ENCODE measurements at regions of chr10 and their contacts with region 1.

Region 1: GRCh38 chr10:32171204-32171603 is 115.0 kb upstream of the KIF5B start:
- DNase-seq: peak; percentile 87 to 89
- H3K4me3 ChIP-seq: no peak overlapping the region
- H3K4me3 Mint-ChIP-seq: peak overlapping the region; percentile 63
- H3K27ac Mint-ChIP-seq: peak overlapping the region; percentile 96
- H3K4me1 ChIP-seq: peaks cover 29% of the 10 kb centered on the region
- H3K4me1 Mint-ChIP-seq: peaks cover 23% of the 10 kb centered on the region
- H3K27me3 ChIP-seq: no peaks in the 10 kb centered on the region
- H3K27me3 Mint-ChIP-seq: no peaks in the 10 kb centered on the region
- CTCF ChIP-seq: no peak

Region 2: DNA sequence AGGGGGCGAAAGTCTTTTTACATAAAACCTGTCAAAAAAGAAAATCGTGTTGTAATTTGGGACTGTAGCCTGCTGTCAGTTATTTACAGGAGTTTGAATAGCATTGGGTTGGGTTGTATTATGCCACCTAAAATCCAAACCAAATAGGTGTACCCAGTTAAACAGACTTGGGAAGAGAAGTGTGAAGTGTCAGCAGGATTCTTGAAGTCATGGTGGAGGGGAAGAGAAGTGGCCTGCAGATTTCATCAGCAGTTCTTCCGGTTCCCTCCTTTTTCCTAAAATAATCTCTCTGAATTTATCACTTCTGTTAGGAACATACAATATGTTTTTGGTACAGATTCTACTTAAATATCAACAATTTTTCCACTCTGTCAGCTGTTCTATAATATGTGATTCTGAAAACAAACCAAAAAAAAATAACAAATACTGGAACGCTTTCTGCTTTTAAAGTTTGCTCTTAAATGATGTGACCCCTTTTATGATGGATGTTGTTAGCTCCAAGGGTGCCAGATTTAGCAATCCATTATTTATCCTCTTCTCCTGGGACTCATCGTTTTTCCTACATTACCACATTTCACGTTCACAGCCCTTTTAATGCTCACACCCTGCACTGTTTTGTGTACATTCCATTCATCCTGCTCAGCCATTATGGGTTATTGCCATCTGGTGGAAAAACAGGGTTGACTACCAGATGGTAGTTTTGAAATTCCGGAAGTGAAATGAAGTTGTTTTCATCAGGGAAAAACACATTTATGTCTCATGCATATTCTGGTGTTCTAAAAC is 223.9 kb before region 1 on chr10:
- CTCF ChIA-PET with region 1: no interaction called
- POLR2A ChIA-PET with region 1: no interaction called
- intact Hi-C with region 1: loop called (anchors 5 kb)
- DNase-seq: peak; percentile 74 to 84
- H3K4me3 ChIP-seq: peak overlapping the region; percentile 10
- H3K4me3 Mint-ChIP-seq: peak overlapping the region; percentile 65
- H3K27ac Mint-ChIP-seq: peak overlapping the region; percentile 70
- H3K4me1 ChIP-seq: peaks cover 42% of the 10 kb centered on the region
- H3K4me1 Mint-ChIP-seq: peaks cover 26% of the 10 kb centered on the region
- H3K27me3 ChIP-seq: no peaks in the 10 kb centered on the region
- H3K27me3 Mint-ChIP-seq: no peaks in the 10 kb centered on the region
- CTCF ChIP-seq: peak; percentile 47 to 82

Region 3: DNA sequence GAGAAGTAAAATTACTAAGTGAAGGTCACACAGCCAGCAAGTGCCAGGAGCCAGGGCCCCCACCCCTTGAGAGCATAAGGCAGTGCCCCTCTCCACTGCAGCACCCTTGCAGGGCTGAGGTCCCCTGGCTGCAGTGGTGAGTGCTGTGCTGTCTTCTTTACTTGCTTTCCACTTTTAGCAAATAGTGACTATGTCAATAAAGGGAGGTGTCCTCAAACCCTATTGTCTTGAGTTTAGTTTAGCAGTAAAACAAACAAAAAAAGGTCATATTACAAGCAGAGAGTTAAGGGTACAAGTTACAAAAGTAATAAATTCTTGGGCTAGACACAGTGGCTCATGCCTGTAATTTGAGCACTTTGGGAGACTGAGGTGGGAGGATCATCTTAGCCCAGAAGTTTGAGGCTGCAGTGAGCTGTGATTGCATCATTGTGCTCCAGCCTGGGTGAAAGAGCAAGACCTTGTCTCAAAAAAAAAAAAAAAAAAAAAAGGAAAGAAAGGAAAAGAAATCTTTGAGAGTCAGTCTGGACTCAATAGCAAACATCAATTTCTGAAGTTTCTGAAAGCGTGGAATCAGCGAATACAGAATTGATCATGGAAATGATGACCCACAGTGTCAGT is 76.0 kb before region 1 on chr10:
- CTCF ChIA-PET with region 1: no interaction called
- POLR2A ChIA-PET with region 1: no interaction called
- intact Hi-C with region 1: loop called (anchors 1 kb)
- DNase-seq: peak; percentile 70 to 83
- H3K4me3 ChIP-seq: no peak overlapping the region
- H3K4me3 Mint-ChIP-seq: no peak overlapping the region
- H3K27ac Mint-ChIP-seq: peak overlapping the region; percentile 68
- H3K4me1 ChIP-seq: peaks cover 21% of the 10 kb centered on the region
- H3K4me1 Mint-ChIP-seq: peaks cover 21% of the 10 kb centered on the region
- H3K27me3 ChIP-seq: no peaks in the 10 kb centered on the region
- H3K27me3 Mint-ChIP-seq: no peaks in the 10 kb centered on the region
- CTCF ChIP-seq: peak in 1 of 2 experiments; percentile 36

Region 4: DNA sequence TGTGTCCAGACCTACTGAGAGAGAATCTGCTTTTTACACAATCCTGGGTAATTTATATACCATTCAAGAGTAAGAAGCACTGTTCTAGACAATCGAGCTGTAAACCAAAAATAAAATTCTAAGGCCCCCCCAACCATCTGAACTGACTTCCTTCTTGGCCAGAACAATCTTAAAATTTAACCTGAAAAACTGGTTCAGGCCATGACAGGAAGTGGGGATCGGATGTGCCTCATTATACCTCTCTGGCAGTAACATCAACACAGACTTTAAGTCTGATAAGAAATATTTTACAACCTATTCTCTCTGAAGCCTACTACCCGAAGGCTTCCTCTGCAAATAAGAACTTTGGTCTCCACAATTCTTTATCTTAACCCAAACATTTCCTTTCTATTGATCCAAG is 39.8 kb before region 1 on chr10:
- CTCF ChIA-PET with region 1: no interaction called
- POLR2A ChIA-PET with region 1: no interaction called
- intact Hi-C with region 1: loop called (anchors 1 kb)
- DNase-seq: peak; percentile 70
- H3K4me3 ChIP-seq: no peak overlapping the region
- H3K4me3 Mint-ChIP-seq: peak overlapping the region; percentile 50
- H3K27ac Mint-ChIP-seq: peak overlapping the region; percentile 43
- H3K4me1 ChIP-seq: peaks cover 33% of the 10 kb centered on the region
- H3K4me1 Mint-ChIP-seq: peaks cover 14% of the 10 kb centered on the region
- H3K27me3 ChIP-seq: no peaks in the 10 kb centered on the region
- H3K27me3 Mint-ChIP-seq: no peaks in the 10 kb centered on the region
- CTCF ChIP-seq: no peak

Region 5: DNA sequence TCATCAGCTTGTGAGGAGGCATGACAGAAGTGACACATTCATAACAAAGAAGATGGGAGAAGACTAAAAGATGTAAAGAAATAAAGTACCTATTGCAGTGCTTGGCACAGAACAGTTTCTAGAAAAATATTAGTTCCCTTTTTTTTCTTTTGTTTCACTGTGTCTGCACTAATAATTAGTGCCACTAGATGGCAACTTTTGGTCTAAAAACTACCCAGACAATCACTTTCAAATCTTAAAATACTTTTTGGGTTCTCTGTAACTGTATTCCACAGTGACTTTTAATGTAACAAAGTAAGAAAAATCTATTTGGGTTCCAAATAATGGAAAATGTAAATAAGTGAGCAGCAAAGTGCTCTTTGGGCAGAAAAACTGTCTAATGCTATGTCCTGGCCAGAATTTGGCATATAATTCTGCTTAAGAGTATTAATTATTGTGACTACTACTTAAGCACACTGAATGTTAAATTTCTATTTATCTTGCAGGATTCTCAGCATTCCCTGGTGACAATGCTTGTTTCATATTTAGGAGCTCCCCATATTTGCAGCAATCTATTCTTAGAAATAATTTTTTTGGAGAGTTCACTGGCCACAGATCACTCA is 19.8 kb after region 1 on chr10:
- CTCF ChIA-PET with region 1: interaction called, 6 read pairs
- POLR2A ChIA-PET with region 1: no interaction called
- intact Hi-C with region 1: loop called (anchors 1 kb)
- DNase-seq: peak in 1 of 2 experiments; percentile 56
- H3K4me3 ChIP-seq: no peak overlapping the region
- H3K4me3 Mint-ChIP-seq: no peak overlapping the region
- H3K27ac Mint-ChIP-seq: no peak overlapping the region
- H3K4me1 ChIP-seq: peaks cover 24% of the 10 kb centered on the region
- H3K4me1 Mint-ChIP-seq: peaks cover 20% of the 10 kb centered on the region
- H3K27me3 ChIP-seq: no peaks in the 10 kb centered on the region
- H3K27me3 Mint-ChIP-seq: no peaks in the 10 kb centered on the region
- CTCF ChIP-seq: peak; percentile 70 to 75

Region 6: DNA sequence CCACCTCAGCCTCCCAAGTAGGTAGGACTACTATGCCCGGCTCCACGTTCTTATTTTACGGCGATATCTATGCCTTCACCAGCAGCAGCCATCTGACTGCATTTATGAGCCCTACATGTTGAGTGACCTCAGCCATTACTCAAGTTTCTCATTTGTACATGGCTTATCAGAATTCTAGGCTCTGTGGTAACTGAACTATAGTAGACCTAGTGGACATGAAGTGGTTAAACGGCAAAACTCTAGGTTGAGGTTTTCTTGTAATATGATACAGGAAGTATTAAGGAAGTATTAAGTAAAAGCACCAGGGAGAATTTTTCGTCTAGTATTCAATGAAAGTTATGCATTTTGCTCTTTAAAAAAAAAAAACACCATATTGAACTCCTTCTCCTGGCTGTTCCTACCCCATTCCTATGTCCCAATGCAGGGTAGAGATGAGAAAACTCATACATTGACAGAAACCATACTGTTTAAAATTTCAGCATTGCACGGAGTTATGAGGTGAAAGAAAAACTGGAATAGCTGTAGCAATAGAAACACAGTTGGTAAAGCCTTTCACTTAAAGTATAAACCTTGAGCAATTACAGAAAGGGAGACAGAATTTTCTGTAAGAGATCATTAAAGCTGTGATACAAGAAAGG is 215.5 kb after region 1 on chr10:
- CTCF ChIA-PET with region 1: no interaction called
- POLR2A ChIA-PET with region 1: no interaction called
- intact Hi-C with region 1: no loop called
- DNase-seq: no peak
- H3K4me3 ChIP-seq: no peak overlapping the region
- H3K4me3 Mint-ChIP-seq: no peak overlapping the region
- H3K27ac Mint-ChIP-seq: no peak overlapping the region
- H3K4me1 ChIP-seq: no peaks in the 10 kb centered on the region
- H3K4me1 Mint-ChIP-seq: no peaks in the 10 kb centered on the region
- H3K27me3 ChIP-seq: no peaks in the 10 kb centered on the region
- H3K27me3 Mint-ChIP-seq: peaks cover 4% of the 10 kb centered on the region
- CTCF ChIP-seq: no peak

Measured in Caco-2 (cell line).